CD4-positive, alpha-beta T cell (primary cell): ENCODE measurements at regions of chr4 and their contacts with region 1.

Region 1: GRCh38 chr4:71009890-71010588 is 16.6 kb downstream of the DCK start:
- DNase-seq: peak in 4 of 14 experiments; percentile 27 to 74 (median 59)
- ATAC-seq: peak; percentile 78
- H3K4me3 ChIP-seq: no peak overlapping the region
- H3K4me3 Mint-ChIP-seq: peak overlapping the region; percentile 1
- H3K27ac ChIP-seq: no peak overlapping the region
- H3K27ac Mint-ChIP-seq: peak overlapping the region; percentile 57
- H3K4me1 ChIP-seq: peaks cover 15% of the 10 kb centered on the region
- H3K4me1 Mint-ChIP-seq: peaks cover 44% of the 10 kb centered on the region
- H3K27me3 ChIP-seq: no peaks in the 10 kb centered on the region
- H3K27me3 Mint-ChIP-seq: no peaks in the 10 kb centered on the region
- CTCF ChIP-seq: peak; percentile 88

Region 2: GRCh38 chr4:70651864-70652506 is 358.1 kb before region 1 on chr4:
- CTCF ChIA-PET with region 1: no interaction called
- POLR2A ChIA-PET with region 1: no interaction called
- intact Hi-C with region 1: loop called (anchors 5 kb)
- DNase-seq: peak in 4 of 14 experiments; percentile 4 to 56 (median 54)
- ATAC-seq: peak; percentile 56
- H3K4me3 ChIP-seq: no peak overlapping the region
- H3K4me3 Mint-ChIP-seq: no peak overlapping the region
- H3K27ac ChIP-seq: no peak overlapping the region
- H3K27ac Mint-ChIP-seq: no peak overlapping the region
- H3K4me1 ChIP-seq: no peaks in the 10 kb centered on the region
- H3K4me1 Mint-ChIP-seq: peaks cover 4% of the 10 kb centered on the region
- H3K27me3 ChIP-seq: no peaks in the 10 kb centered on the region
- H3K27me3 Mint-ChIP-seq: peaks cover 11% of the 10 kb centered on the region
- CTCF ChIP-seq: peak; percentile 71

Region 3: DNA sequence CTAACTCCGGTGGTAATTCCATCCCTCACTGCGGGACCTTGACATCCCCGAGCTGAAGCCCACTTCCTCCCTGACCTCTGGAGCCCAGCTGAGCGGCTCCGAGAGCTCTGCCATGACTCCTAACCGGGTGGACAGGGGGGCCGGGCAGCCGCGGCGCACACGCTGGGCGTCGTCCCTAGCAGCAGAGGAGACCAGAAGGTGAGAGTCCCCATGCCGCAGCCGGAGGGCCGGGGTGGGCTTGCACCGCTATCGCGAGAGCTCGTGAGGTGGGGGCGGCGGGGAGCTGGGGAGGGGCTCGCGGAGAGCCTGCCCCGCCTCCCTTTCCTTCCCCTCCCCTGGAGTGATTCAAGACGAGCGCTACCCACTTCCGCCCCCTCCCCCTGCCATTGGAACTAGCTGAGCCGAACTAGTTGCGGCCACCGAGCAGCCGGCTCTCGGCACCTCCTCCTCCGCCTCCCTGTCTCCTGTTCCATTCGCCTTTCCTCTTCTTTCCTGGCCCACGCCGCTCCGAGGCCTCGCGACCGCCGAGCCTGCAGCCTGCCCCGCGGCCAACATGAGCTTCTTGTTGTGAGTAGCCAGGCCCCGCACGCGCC is 108.0 kb before region 1 on chr4 and contains the start of gene MOB1B:
- CTCF ChIA-PET with region 1: no interaction called
- POLR2A ChIA-PET with region 1: interaction called, 4 read pairs
- intact Hi-C with region 1: loop called in 1 of 2 experiments (anchors 2 kb)
- DNase-seq: peak; percentile 69 to 92 (median 82)
- ATAC-seq: peak; percentile 97
- H3K4me3 ChIP-seq: peak within 1 kb of the TSS; percentile 74
- H3K4me3 Mint-ChIP-seq: peak within 1 kb of the TSS; percentile 100
- H3K27ac ChIP-seq: peak within 1 kb of the TSS in 1 of 2 donors; percentile 16
- H3K27ac Mint-ChIP-seq: peak within 1 kb of the TSS; percentile 85
- H3K4me1 ChIP-seq: peaks cover 16% of the 10 kb centered on the region
- H3K4me1 Mint-ChIP-seq: peaks cover 48% of the 10 kb centered on the region
- H3K27me3 ChIP-seq: no peaks in the 10 kb centered on the region
- H3K27me3 Mint-ChIP-seq: no peaks in the 10 kb centered on the region
- CTCF ChIP-seq: peak; percentile 27
- total RNA-seq, gene MOB1B: 13.1 to 13.4 TPM

Region 4: GRCh38 chr4:70993181-70994068 is 16.6 kb before region 1 on chr4 and contains the start of gene DCK:
- CTCF ChIA-PET with region 1: interaction called, 13 read pairs
- POLR2A ChIA-PET with region 1: interaction called, 40 read pairs
- intact Hi-C with region 1: loop called in 1 of 2 experiments (anchors 2 kb)
- DNase-seq: peak; percentile 64 to 93 (median 79)
- ATAC-seq: peak; percentile 77
- H3K4me3 ChIP-seq: peak within 1 kb of the TSS; percentile 95
- H3K4me3 Mint-ChIP-seq: peak within 1 kb of the TSS; percentile 93
- H3K27ac ChIP-seq: peak within 1 kb of the TSS; percentile 82
- H3K27ac Mint-ChIP-seq: peak within 1 kb of the TSS; percentile 85
- H3K4me1 ChIP-seq: peaks cover 20% of the 10 kb centered on the region
- H3K4me1 Mint-ChIP-seq: peaks cover 59% of the 10 kb centered on the region
- H3K27me3 ChIP-seq: no peaks in the 10 kb centered on the region
- H3K27me3 Mint-ChIP-seq: no peaks in the 10 kb centered on the region
- CTCF ChIP-seq: no peak
- total RNA-seq, gene DCK: 12.8 to 13.9 TPM